Activated naive CD4-positive, alpha-beta T cell treated with anti-CD3 and anti-CD28 coated beads, Interleukin-2, amount 10 ng/mL, durations not matched to agents 7 days and 5 days (primary cell): ENCODE measurements at regions of chr12 and their contacts with region 1.

Region 1: DNA sequence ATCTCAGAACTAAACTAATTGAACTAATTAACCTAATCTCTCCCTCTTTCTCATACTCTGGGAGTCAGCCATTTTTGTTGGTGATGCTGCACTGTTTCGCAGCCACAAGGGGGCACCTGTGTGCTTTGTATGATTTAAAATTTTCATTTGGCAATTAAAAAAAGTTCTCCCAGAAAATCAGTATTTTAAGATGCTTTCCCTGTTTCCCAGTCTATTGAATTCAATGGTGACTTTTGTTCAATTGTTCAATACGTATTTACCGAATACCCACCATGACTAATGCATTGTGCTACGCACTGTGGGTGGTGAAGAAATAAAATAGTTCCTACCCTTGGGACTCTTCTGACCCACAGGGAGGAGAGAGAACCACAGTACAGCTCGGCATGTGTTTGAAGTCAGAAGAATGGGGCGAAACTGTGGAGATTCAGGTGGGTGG is 63.7 kb downstream of the ZNF664 start:
- DNase-seq: peak; percentile 55
- H3K4me3 Mint-ChIP-seq: no peak overlapping the region
- H3K27ac Mint-ChIP-seq: no peak overlapping the region
- H3K4me1 Mint-ChIP-seq: no peaks in the 10 kb centered on the region
- H3K27me3 Mint-ChIP-seq: peaks cover 21% of the 10 kb centered on the region

Region 2: GRCh38 chr12:123905319-123905925 is 131.3 kb before region 1 on chr12:
- CTCF ChIA-PET with region 1: interaction called, 29 read pairs
- DNase-seq: peak; percentile 79
- H3K4me3 Mint-ChIP-seq: no peak overlapping the region
- H3K27ac Mint-ChIP-seq: no peak overlapping the region
- H3K4me1 Mint-ChIP-seq: peaks cover 8% of the 10 kb centered on the region
- H3K27me3 Mint-ChIP-seq: peaks cover 35% of the 10 kb centered on the region

Region 3: DNA sequence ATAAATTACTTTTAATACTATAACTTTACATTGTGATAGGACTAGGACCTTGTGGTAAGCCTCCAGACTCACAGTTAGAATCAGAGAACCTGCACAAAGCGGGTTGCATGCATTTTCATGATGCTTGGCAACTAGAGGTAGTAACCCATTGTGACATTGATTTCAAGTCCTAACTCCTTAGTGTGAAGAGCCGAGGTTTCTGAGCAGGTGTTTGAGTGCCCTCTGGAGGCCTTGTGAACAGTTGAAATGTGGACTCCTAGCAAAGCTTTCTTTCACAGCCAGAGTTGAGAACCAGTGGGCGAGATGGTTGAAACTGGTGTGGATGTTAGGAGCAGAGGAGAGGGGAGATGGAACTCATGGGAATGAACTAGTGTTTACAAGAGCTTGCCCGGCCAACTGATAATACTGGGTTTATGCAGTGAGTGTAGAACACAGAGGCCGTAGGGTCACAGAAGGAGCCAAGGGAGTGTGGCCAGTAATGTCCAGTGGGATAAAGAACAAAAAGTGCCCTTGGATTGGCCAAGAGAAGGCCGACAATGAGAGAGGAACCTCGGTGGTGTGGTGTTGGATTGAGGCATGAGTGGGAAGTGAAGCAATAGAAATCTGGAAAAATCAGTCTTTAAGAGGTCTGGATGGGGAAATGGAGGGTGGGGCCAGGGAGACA is 52.7 kb before region 1 on chr12:
- CTCF ChIA-PET with region 1: interaction called, 15 read pairs
- DNase-seq: peak; percentile 67
- H3K4me3 Mint-ChIP-seq: no peak overlapping the region
- H3K27ac Mint-ChIP-seq: no peak overlapping the region
- H3K4me1 Mint-ChIP-seq: peaks cover 3% of the 10 kb centered on the region
- H3K27me3 Mint-ChIP-seq: no peaks in the 10 kb centered on the region

Region 4: DNA sequence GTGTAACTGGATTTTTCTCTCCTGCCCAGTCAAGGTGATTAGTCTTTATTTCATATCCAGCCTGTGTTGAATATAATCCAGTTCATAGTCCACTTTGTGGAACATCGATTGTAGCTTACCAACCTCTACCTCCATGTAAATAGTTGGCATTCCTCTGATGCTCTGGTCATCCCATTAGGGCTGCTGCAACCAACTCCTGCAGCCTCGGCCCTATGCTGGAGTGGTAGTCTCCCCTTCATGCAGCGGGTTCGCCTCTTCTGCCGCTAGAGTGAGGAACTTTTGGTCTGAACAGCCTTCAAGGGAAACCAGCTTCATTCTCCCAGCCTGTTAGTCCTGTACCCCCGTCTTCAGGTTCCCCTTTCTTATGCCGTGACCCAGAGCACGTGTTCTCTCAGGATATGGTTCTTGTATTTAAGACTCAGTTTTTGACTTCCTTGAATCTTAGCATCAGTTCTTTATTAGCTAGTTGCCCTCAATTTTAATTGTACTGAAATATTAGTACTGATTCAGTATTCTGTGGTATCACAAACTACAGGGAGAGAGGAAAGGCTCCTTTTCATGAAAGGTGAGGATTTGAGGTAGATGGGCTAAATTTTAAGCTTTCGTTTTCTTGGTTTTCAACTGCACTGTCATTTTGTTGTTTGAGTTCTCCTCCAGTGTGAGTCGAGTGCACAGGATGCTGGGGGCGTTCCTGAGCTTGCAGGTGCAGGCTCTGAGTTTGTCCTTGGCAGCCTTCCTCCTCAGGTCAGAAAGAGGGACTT is 30.4 kb before region 1 on chr12:
- CTCF ChIA-PET with region 1: interaction called, 10 read pairs
- DNase-seq: peak; percentile 69
- H3K4me3 Mint-ChIP-seq: peak overlapping the region; percentile 17
- H3K27ac Mint-ChIP-seq: peak overlapping the region; percentile 89
- H3K4me1 Mint-ChIP-seq: peaks cover 38% of the 10 kb centered on the region
- H3K27me3 Mint-ChIP-seq: no peaks in the 10 kb centered on the region

Region 5: DNA sequence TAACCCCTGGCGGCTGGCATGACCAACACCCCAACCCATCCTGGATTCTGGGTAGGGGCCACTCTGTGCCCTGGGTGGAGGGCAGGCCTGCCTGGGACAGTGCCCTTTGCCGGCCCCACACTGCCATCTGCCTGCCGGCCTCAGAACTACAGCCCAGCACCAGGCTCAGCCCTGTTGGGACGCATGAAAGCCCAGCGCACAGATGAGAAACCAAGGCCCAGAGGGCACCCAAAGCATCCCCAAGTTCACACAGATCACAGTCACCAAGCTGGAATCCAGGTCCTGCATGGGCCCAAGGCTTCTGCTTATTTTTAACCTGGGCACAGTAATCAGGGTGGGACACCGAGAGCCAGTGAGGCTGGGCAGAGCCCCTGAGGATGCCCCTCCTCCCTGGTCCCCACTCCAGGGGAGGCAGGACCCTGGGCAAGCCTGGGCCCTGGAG is 284.4 kb after region 1 on chr12:
- CTCF ChIA-PET with region 1: interaction called, 15 read pairs
- DNase-seq: peak; percentile 78
- H3K4me3 Mint-ChIP-seq: no peak overlapping the region
- H3K27ac Mint-ChIP-seq: no peak overlapping the region
- H3K4me1 Mint-ChIP-seq: no peaks in the 10 kb centered on the region
- H3K27me3 Mint-ChIP-seq: no peaks in the 10 kb centered on the region

Region 6: GRCh38 chr12:124767066-124767821 is 730.6 kb after region 1 on chr12:
- CTCF ChIA-PET with region 1: interaction called, 17 read pairs
- DNase-seq: peak; percentile 85
- H3K4me3 Mint-ChIP-seq: no peak overlapping the region
- H3K27ac Mint-ChIP-seq: peak overlapping the region; percentile 20
- H3K4me1 Mint-ChIP-seq: peaks cover 9% of the 10 kb centered on the region
- H3K27me3 Mint-ChIP-seq: peaks cover 41% of the 10 kb centered on the region